CD4-positive, alpha-beta memory T cell (primary cell): ENCODE measurements at regions of chr12 and their contacts with region 1.

Region 1: GRCh38 chr12:55654511-55655214 is 18.0 kb downstream of the OR10P1 start:
- DNase-seq: no peak
- H3K4me3 ChIP-seq: no peak overlapping the region
- H3K4me3 Mint-ChIP-seq: no peak overlapping the region
- H3K27ac ChIP-seq: no peak overlapping the region
- H3K27ac Mint-ChIP-seq: no peak overlapping the region
- H3K4me1 ChIP-seq: peaks cover 2% of the 10 kb centered on the region
- H3K4me1 Mint-ChIP-seq: peaks cover 0 to 6% (median 5%) of the 10 kb centered on the region in 4 donors
- H3K27me3 ChIP-seq: no peaks in the 10 kb centered on the region
- H3K27me3 Mint-ChIP-seq: no peaks in the 10 kb centered on the region

Region 2: DNA sequence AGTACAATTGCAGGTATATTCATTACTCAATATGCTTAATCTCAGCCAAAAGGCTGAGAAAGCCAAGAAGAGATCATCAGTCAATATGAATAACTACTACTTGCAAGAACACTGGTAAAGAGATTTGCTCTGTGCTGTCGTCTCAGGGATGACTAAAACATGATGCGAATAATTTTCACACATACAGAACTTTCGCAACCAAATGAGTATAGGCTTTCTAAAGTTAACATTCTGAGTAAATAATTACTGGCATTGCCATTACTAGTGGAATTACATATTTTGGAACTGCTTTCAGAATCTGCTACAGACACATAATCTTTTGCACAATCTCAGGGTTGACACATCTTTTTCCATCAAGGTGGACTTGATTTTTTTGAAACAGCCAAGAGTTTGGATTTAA is 1132.4 kb before region 1 on chr12:
- CTCF ChIA-PET with region 1: no interaction called
- POLR2A ChIA-PET with region 1: no interaction called
- intact Hi-C with region 1: no loop called
- DNase-seq: no peak
- H3K4me3 ChIP-seq: no peak overlapping the region
- H3K4me3 Mint-ChIP-seq: no peak overlapping the region
- H3K27ac ChIP-seq: no peak overlapping the region
- H3K27ac Mint-ChIP-seq: peak overlapping the region in 4 of 7 donors; percentile 4 to 25 (median 12)
- H3K4me1 ChIP-seq: no peaks in the 10 kb centered on the region
- H3K4me1 Mint-ChIP-seq: peaks cover 0 to 7% (median 1%) of the 10 kb centered on the region in 4 donors
- H3K27me3 ChIP-seq: no peaks in the 10 kb centered on the region
- H3K27me3 Mint-ChIP-seq: no peaks in the 10 kb centered on the region

Region 3: DNA sequence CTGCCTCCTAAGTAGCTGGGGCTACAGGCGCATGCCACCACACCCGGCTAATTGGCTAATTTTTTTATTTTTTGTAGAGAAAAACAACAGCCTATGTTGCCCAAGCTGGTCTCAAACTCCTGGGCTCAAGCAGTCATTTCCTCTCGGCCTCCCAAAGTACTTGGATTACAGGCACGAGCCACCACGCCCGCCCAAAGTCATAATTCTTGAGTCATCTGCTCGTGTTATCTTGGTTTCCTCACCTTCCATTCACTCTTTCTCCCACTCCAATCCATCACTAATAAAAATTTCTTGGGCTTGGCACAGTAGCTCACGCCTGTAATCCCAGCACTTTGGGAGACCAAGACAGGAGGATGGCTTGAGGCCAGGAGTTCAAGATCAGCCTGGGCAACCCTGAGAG is 21.0 kb after region 1 on chr12:
- CTCF ChIA-PET with region 1: interaction called, 14 read pairs
- POLR2A ChIA-PET with region 1: no interaction called
- intact Hi-C with region 1: no loop called
- DNase-seq: no peak
- H3K4me3 ChIP-seq: no peak overlapping the region
- H3K4me3 Mint-ChIP-seq: no peak overlapping the region
- H3K27ac ChIP-seq: no peak overlapping the region
- H3K27ac Mint-ChIP-seq: no peak overlapping the region
- H3K4me1 ChIP-seq: no peaks in the 10 kb centered on the region
- H3K4me1 Mint-ChIP-seq: peaks cover 0 to under 1% (median 0%) of the 10 kb centered on the region in 4 donors
- H3K27me3 ChIP-seq: no peaks in the 10 kb centered on the region
- H3K27me3 Mint-ChIP-seq: peaks cover 10 to 19% of the 10 kb centered on the region in 2 donors

Region 4: GRCh38 chr12:55760663-55761062 is 106.0 kb after region 1 on chr12:
- CTCF ChIA-PET with region 1: no interaction called
- POLR2A ChIA-PET with region 1: no interaction called
- intact Hi-C with region 1: no loop called
- DNase-seq: no peak
- H3K4me3 ChIP-seq: no peak overlapping the region
- H3K4me3 Mint-ChIP-seq: no peak overlapping the region
- H3K27ac ChIP-seq: no peak overlapping the region
- H3K27ac Mint-ChIP-seq: peak overlapping the region; percentile 6 to 84 (median 36)
- H3K4me1 ChIP-seq: no peaks in the 10 kb centered on the region
- H3K4me1 Mint-ChIP-seq: peaks cover 0 to 4% (median 2%) of the 10 kb centered on the region in 4 donors
- H3K27me3 ChIP-seq: no peaks in the 10 kb centered on the region
- H3K27me3 Mint-ChIP-seq: no peaks in the 10 kb centered on the region